Dorsolateral prefrontal cortex (tissue), 120 donors: ENCODE measurements at regions of chr4 and their contacts with region 1.

Region 1: GRCh38 chr4:105471566-105472176 is 2.2 kb downstream of the PPA2 start:
- DNase-seq: peak in 7 of 10 donors; percentile 41 to 69 (median 58)
- H3K4me3 ChIP-seq: peak overlapping the region in 57 of 59 donors; percentile 27 to 98 (median 89)
- H3K27ac ChIP-seq: peak overlapping the region in 22 of 59 donors; percentile 6 to 99 (median 36)
- H3K27me3 ChIP-seq: no peaks in the 10 kb centered on the region
- CTCF ChIP-seq: peak; percentile 55 to 90 (median 79)

Region 2: GRCh38 chr4:103996637-103997036 is 1475.0 kb before region 1 on chr4:
- intact Hi-C with region 1: loop called in 1 of 2 experiments (anchors 5 kb)
- DNase-seq: peak in 5 of 10 donors; percentile 16 to 65 (median 47)
- H3K4me3 ChIP-seq: peak overlapping the region in 28 of 59 donors; percentile 0 to 44 (median 20)
- H3K27ac ChIP-seq: peak overlapping the region in 29 of 59 donors; percentile 2 to 80 (median 45)
- H3K27me3 ChIP-seq: no peaks in the 10 kb centered on the region
- CTCF ChIP-seq: no peak

Region 3: DNA sequence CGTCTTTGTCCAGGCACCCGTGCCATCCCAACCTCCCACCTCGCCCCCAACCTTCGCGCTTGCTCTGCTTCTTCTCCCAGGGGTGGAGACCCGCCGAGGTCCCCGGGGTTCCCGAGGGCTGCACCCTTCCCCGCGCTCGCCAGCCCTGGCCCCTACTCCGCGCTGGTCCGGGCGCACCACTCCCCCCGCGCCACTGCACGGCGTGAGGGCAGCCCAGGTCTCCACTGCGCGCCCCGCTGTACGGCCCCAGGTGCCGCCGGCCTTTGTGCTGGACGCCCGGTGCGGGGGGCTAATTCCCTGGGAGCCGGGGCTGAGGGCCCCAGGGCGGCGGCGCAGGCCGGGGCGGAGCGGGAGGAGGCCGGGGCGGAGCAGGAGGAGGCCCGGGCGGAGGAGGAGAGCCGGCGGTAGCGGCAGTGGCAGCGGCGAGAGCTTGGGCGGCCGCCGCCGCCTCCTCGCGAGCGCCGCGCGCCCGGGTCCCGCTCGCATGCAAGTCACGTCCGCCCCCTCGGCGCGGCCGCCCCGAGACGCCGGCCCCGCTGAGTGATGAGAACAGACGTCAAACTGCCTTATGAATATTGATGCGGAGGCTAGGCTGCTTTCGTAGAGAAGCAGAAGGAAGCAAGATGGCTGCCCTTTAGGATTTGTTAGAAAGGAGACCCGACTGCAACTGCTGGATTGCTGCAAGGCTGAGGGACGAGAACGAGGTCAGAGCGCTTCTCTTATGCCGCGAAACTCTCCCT is 325.2 kb before region 1 on chr4 and contains the start of gene TET2:
- intact Hi-C with region 1: loop called (anchors 2 kb)
- DNase-seq: peak; percentile 55 to 91 (median 89)
- H3K4me3 ChIP-seq: peak within 1 kb of the TSS; percentile 56 to 96 (median 84)
- H3K27ac ChIP-seq: peak within 1 kb of the TSS; percentile 35 to 98 (median 91)
- H3K27me3 ChIP-seq: no peaks in the 10 kb centered on the region
- CTCF ChIP-seq: peak in 15 of 56 donors; percentile 4 to 41 (median 18)
- total RNA-seq, gene TET2: 15.8 to 39.0 (median 24.0) TPM

Region 4: GRCh38 chr4:105236202-105236915 is 235.3 kb before region 1 on chr4:
- intact Hi-C with region 1: loop called in 1 of 2 experiments (anchors 10 kb)
- DNase-seq: no peak
- H3K4me3 ChIP-seq: no peak overlapping the region
- H3K27ac ChIP-seq: no peak overlapping the region
- H3K27me3 ChIP-seq: no peaks in the 10 kb centered on the region
- CTCF ChIP-seq: no peak

Region 5: GRCh38 chr4:105246712-105247111 is 225.0 kb before region 1 on chr4:
- intact Hi-C with region 1: loop called in 1 of 2 experiments (anchors 5 kb)
- DNase-seq: peak in 1 of 10 donors; percentile 31
- H3K4me3 ChIP-seq: no peak overlapping the region
- H3K27ac ChIP-seq: peak overlapping the region in 1 of 59 donors; percentile 28
- H3K27me3 ChIP-seq: no peaks in the 10 kb centered on the region
- CTCF ChIP-seq: no peak

Region 6: GRCh38 chr4:105708530-105709391 is 237.1 kb after region 1 on chr4 and contains the starts of genes GSTCD and INTS12:
- intact Hi-C with region 1: loop called (anchors 5 to 10 kb)
- DNase-seq: peak; percentile 82 to 95 (median 93)
- H3K4me3 ChIP-seq: peak within 1 kb of the TSS; percentile 59 to 100 (median 92)
- H3K27ac ChIP-seq: peak within 1 kb of the TSS in 58 of 59 donors; percentile 30 to 95 (median 82)
- H3K27me3 ChIP-seq: no peaks in the 10 kb centered on the region
- CTCF ChIP-seq: peak in 34 of 56 donors; percentile 4 to 52 (median 30)
- total RNA-seq, gene GSTCD: 7.1 to 19.5 (median 12.1) TPM
- total RNA-seq, gene INTS12: 10.9 to 21.8 (median 16.1) TPM

Region 7: DNA sequence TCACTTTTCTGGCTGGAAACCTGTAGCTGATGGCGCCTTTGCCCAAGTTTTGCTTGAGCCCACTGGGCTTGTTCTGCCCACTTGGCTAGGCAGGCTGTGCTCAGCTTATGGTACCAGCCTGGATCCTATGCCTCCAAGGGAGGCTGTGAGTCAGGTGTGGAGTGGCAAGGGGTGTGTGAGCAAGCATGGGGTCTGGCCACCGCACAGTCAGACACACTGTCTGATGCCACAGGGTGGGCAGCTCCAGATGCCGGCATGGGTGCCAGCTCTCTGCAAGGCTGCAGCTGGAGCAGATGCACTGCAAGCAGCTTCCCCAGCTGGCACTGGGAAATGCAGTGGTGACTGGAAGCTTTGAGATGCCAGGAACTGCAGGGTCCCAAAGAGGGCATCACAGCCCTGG is 913.2 kb after region 1 on chr4:
- intact Hi-C with region 1: no loop called
- DNase-seq: no peak
- H3K4me3 ChIP-seq: no peak overlapping the region
- H3K27ac ChIP-seq: no peak overlapping the region
- H3K27me3 ChIP-seq: no peaks in the 10 kb centered on the region
- CTCF ChIP-seq: no peak